H1 (cell line): ENCODE measurements at regions of chr5 and their contacts with region 1.

Region 1: DNA sequence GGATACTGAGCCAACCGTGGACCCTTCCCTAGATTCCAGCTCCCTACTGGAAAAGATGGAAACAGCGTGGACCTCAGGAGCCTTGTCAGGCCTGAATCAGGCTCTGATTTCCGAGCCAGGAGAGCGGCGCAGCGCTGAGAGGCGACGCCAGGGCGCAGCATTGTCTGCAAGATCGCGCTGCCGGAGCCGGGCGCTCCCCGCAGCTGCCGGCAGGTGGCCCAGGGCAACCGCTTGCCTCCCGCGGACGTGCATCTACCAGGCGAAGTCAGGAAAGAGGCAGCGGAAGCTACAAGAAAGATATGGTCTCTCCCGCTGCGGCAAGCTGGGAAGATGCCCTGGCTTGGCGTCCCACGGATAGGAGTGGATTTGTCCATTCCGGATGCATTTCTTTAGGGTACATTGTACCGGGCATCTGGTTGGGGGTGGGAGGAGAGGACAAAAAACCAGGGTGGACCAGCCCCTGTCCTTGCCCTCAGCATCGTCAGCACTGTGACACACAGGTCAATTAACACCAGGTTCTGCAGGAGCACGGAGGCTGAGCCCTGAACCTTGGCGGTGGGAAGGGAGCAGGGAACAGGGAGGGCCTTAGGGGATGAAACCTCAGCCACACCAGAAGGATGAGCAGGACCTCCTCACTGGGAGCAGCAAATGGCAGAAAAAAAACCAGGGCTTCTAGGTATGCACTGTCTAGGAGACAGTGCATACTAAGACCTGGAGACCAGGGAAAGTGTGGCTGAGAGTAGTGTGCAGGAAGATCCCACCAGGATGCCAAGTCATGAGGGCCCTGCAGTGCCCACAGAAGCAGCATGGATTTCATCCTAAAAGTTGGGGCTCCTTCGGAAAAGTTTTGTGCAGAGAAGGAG is 55.9 kb downstream of the SFXN1 start:
- DNase-seq: peak; percentile 82 to 91
- H3K4me3 ChIP-seq: peak overlapping the region in 3 of 4 experiments; percentile 7 to 33 (median 14); a peak in 3 of 8 replicates
- H3K27ac ChIP-seq: no peak overlapping the region
- H3K4me1 ChIP-seq: peaks cover 0 to 17% (median 11%) of the 10 kb centered on the region in 4 experiments; a peak in 6 of 7 replicates
- H3K27me3 ChIP-seq: no peaks in the 10 kb centered on the region
- CTCF ChIP-seq: peak; percentile 100
- EP300 ChIP-seq: peak in 1 of 2 experiments; percentile 55; a peak in 1 of 3 replicates
- POLR2A ChIP-seq: no peak
- RAD21 ChIP-seq: peak; percentile 100

Region 2: DNA sequence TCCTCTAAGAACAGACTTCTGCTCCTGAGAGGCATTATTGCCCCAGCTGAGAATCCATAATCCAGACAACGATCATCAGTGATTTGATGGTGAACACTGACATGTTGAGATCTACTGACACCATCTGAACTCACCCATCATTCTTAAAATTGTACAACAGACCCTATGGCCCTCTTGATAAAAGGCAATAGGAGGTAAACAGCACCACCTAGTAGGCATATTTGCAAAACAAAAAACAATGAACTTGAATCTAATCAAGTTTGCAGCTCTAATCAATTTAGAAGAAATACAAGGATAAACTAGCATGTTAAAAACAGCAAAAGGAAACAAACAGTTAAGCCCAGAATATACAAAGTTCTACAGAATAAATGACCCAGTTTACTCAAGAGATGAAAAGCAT is 33.7 kb after region 1 on chr5:
- CTCF ChIA-PET with region 1: interaction called, 43 read pairs
- POLR2A ChIA-PET with region 1: interaction called, 4 read pairs
- DNase-seq: no peak
- H3K4me3 ChIP-seq: no peak overlapping the region
- H3K27ac ChIP-seq: no peak overlapping the region
- H3K4me1 ChIP-seq: peaks cover 0 to 6% (median 3%) of the 10 kb centered on the region in 4 experiments; a peak in 3 of 7 replicates
- H3K27me3 ChIP-seq: no peaks in the 10 kb centered on the region; a peak in 1 of 7 replicates
- CTCF ChIP-seq: no peak; a peak in 1 of 4 replicates
- EP300 ChIP-seq: no peak
- POLR2A ChIP-seq: no peak
- RAD21 ChIP-seq: peak; percentile 60 to 63

Region 3: DNA sequence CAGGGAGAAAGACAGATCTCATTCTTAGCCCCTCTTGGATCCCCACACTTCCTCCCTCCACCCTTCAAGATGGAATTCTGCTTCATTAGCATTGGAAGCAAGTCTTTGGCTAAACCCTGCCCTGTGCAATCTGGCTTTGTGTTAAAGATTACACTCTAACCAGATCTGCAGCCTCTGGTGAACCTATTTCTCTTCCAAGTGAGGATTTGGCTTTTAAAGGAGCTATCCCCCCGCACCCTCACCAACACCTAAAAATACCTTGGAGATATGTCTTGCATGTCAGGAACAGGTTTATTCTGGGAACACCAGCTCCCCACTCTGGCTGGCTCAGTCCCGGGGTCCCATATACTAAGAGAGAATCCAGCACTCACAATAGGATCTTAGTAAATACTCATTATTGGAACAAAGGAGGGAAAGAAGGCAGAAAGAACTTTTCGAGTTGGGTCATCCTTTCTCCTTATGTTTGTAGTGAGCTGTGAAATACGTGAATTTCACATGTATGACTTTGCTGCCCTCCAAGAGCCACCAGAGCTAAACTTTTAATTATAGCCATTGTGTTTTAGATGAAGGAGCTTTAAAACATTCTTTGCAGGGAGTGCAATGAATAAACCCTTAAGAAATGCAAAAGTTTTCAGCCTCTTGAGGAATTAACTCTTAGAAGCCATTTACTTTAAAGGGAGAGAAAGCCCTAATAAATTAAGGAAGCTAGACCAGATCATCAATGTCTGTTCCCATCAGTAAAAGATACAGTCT is 69.9 kb after region 1 on chr5:
- CTCF ChIA-PET with region 1: interaction called, 19 read pairs
- POLR2A ChIA-PET with region 1: no interaction called
- DNase-seq: no peak
- H3K4me3 ChIP-seq: peak overlapping the region in 3 of 4 experiments; percentile 1 to 27 (median 1); a peak in 3 of 8 replicates
- H3K27ac ChIP-seq: peak overlapping the region; percentile 36; the same call in 1 of the 2 replicates
- H3K4me1 ChIP-seq: peaks cover 0 to 6% (median 2%) of the 10 kb centered on the region in 4 experiments; a peak in 3 of 7 replicates
- H3K27me3 ChIP-seq: no peaks in the 10 kb centered on the region
- CTCF ChIP-seq: no peak
- EP300 ChIP-seq: no peak
- POLR2A ChIP-seq: no peak
- RAD21 ChIP-seq: no peak

Region 4: GRCh38 chr5:175657593-175658271 is 123.4 kb after region 1 on chr5 and contains the start of gene HRH2:
- CTCF ChIA-PET with region 1: interaction called, 15 read pairs
- POLR2A ChIA-PET with region 1: interaction called, 3 read pairs
- DNase-seq: peak in 1 of 2 experiments; percentile 71
- H3K4me3 ChIP-seq: peak within 1 kb of the TSS; percentile 51 to 83 (median 80)
- H3K27ac ChIP-seq: no peak within 1 kb of the TSS
- H3K4me1 ChIP-seq: peaks cover 0 to 11% (median 2%) of the 10 kb centered on the region in 4 experiments; a peak in 5 of 7 replicates
- H3K27me3 ChIP-seq: peaks cover 0 to 6% (median 0%) of the 10 kb centered on the region in 4 experiments; a peak in 5 of 7 replicates
- CTCF ChIP-seq: no peak
- EP300 ChIP-seq: no peak
- POLR2A ChIP-seq: no peak
- RAD21 ChIP-seq: peak in 1 of 2 experiments; percentile 11; a peak in 1 of 4 replicates
- total RNA-seq, gene HRH2: 8.1 and 9.3 TPM in 2 replicates

Region 5: DNA sequence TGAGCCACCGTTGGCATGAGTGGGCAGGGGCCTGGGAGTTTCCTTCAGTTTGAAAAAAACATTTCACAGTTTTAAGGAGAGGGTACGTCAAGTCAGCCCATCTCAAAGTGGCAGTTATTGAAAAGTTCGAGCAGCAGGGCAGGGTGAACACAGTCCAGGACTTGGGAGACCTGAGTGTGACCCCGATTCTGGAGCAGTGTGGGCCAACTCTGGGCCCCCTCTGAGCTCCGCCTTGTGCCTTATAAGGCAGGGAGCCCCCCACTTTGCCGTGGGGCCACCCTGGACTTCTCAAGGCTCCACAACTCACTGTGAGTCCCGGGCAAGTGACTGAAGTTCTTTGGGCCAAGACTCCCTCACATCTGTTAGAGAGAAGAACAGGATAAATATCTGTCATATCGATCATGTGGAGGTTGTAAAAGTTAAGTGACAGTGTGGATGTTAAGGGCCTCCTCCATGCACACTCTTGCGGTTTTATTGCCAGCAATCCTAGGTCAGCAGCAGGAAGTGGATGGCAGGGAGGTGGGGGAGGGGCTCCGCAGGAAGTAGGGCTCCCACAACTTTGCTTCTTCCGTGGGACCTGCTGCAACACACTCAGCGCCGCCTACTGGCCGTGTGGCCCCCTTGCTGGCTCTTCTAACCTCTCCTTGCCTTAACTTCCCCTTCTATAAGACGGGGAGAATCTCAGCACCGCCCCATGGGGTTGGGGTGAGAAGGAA is 162.0 kb after region 1 on chr5:
- CTCF ChIA-PET with region 1: interaction called, 79 read pairs
- POLR2A ChIA-PET with region 1: interaction called, 4 read pairs
- DNase-seq: peak; percentile 68 to 84
- H3K4me3 ChIP-seq: no peak overlapping the region
- H3K27ac ChIP-seq: 0 out of 2 replicates have a peak overlapping the region, but pooled peaks have one; percentile 0
- H3K4me1 ChIP-seq: peaks cover 0 to 10% (median 4%) of the 10 kb centered on the region in 4 experiments; a peak in 5 of 7 replicates
- H3K27me3 ChIP-seq: no peaks in the 10 kb centered on the region; a peak in 1 of 7 replicates
- CTCF ChIP-seq: peak in 2 of 3 experiments; percentile 91 to 96; a peak in 3 of 4 replicates
- EP300 ChIP-seq: peak in 1 of 2 experiments; percentile 67; a peak in 1 of 3 replicates
- POLR2A ChIP-seq: no peak
- RAD21 ChIP-seq: peak; percentile 76 to 85

Region 6: GRCh38 chr5:175867587-175868347 is 333.5 kb after region 1 on chr5:
- CTCF ChIA-PET with region 1: interaction called, 13 read pairs
- POLR2A ChIA-PET with region 1: no interaction called
- DNase-seq: peak in 1 of 2 experiments; percentile 65
- H3K4me3 ChIP-seq: no peak overlapping the region
- H3K27ac ChIP-seq: no peak overlapping the region
- H3K4me1 ChIP-seq: peaks cover 9 to 13% (median 11%) of the 10 kb centered on the region in 4 experiments; a peak in 6 of 7 replicates
- H3K27me3 ChIP-seq: peaks cover 0 to 13% (median 3%) of the 10 kb centered on the region in 4 experiments; a peak in 3 of 7 replicates
- CTCF ChIP-seq: peak; percentile 71 to 86 (median 78)
- EP300 ChIP-seq: no peak
- POLR2A ChIP-seq: no peak
- RAD21 ChIP-seq: peak; percentile 82 to 87